Aorta (tissue), 5 donors: ENCODE measurements at regions of chr10 and their contacts with region 1.

Region 1: GRCh38 chr10:77179015-77179695 is 458.5 kb downstream of the KCNMA1 start:
- DNase-seq: peak; percentile 75 to 79
- ATAC-seq: peak; percentile 61
- H3K4me3 ChIP-seq: no peak overlapping the region
- H3K27ac ChIP-seq: peak overlapping the region in 1 of 2 donors; percentile 62
- H3K4me1 ChIP-seq: peaks cover 9 to 12% of the 10 kb centered on the region in 2 donors
- H3K27me3 ChIP-seq: no peaks in the 10 kb centered on the region

Region 2: GRCh38 chr10:77104459-77104980 is 74.6 kb before region 1 on chr10:
- intact Hi-C with region 1: no loop called
- DNase-seq: peak; percentile 74 to 82
- ATAC-seq: peak; percentile 69
- H3K4me3 ChIP-seq: no peak overlapping the region
- H3K27ac ChIP-seq: peak overlapping the region in 1 of 2 donors; percentile 33
- H3K4me1 ChIP-seq: peaks cover 0 to 11% of the 10 kb centered on the region in 2 donors
- H3K27me3 ChIP-seq: no peaks in the 10 kb centered on the region

Region 3: DNA sequence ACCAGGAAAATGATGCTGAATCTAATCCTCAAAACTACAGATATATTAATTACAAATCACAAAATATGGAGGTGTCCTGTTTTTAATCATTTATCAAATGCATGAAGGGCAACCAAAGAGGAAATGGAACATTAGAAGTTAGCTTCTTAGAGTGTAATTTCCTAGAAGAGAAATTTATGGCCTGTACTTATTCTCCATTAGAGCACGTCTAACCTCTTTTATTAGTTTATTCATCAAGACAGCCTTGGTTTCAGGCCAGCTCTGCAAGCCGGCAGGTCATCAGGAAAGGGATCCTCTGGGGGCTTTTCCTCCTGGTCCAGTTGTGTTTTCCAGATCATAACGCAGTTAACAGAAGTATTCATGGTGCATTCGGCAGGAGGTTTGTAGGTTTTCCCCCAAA is 59.1 kb before region 1 on chr10:
- intact Hi-C with region 1: no loop called
- DNase-seq: no peak
- ATAC-seq: no peak
- H3K4me3 ChIP-seq: no peak overlapping the region
- H3K27ac ChIP-seq: no peak overlapping the region
- H3K4me1 ChIP-seq: no peaks in the 10 kb centered on the region
- H3K27me3 ChIP-seq: no peaks in the 10 kb centered on the region

Region 4: DNA sequence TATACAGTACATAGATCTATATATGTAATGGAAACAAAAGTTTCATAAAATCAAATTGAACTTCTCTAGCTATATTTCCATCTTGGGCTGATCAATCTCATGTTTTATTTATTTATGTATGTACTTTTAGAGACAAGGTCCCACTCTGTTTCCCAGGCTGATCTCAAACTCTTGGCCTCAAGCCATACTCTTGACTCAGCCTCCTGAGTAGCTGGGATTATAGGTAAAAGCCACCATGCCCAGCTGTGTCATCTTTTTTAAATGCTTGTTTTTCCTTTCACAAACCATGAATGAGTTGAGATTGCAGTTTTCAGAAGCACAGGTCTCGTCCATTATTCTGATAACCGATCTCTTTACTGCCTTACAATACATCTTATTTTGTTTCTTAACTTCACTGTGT is 57.5 kb after region 1 on chr10:
- intact Hi-C with region 1: loop called (anchors 5 kb)
- DNase-seq: no peak
- ATAC-seq: no peak
- H3K4me3 ChIP-seq: no peak overlapping the region
- H3K27ac ChIP-seq: peak overlapping the region in 1 of 2 donors; percentile 22
- H3K4me1 ChIP-seq: peaks cover 6 to 11% of the 10 kb centered on the region in 2 donors
- H3K27me3 ChIP-seq: no peaks in the 10 kb centered on the region

Region 5: GRCh38 chr10:77251297-77252013 is 72.3 kb after region 1 on chr10:
- intact Hi-C with region 1: loop called in 1 of 2 experiments (anchors 5 kb)
- DNase-seq: no peak
- ATAC-seq: no peak
- H3K4me3 ChIP-seq: no peak overlapping the region
- H3K27ac ChIP-seq: no peak overlapping the region
- H3K4me1 ChIP-seq: peaks cover 3 to 8% of the 10 kb centered on the region in 2 donors
- H3K27me3 ChIP-seq: no peaks in the 10 kb centered on the region

Region 6: DNA sequence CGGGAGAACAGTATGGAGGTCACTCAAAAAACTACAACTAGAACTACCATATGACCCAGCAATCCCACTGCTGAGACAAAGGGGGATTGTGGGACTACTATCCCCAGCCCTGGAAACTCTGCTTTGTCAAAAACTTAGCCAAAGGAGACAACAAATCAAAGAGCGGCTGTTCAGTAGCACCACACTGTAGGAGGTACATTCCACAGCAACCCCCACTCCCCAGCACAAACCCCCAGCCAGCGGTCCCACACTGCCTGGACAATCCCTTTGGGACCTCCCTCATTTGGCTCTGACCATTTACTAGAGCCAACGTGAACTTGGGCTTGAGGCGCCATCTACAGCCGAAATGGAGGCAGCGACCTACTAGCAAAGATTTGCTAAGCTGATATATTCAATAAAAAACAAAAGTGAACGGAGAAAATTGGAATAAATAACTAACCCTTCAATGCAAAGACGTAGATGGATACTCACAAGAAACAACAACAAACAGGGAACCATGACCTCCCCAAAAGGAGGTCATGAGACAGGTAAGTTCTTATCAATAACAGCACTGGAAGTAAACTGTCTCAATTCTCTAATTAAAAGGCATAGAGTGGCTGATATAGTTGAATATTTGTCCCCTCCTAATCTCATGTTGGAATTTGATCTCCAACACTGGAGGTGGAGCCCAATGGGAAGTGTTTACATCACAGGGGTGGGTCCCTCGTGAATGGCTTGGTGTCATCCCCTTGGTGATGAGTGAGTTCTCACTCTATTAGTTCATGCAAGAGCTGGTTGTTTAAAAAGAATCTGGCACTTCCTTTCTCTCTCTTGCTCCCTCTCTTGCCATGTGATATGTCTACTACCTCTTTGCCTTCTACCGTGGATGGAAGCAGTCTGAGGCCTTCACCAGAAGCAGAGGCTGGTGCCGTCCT is 577.4 kb after region 1 on chr10:
- intact Hi-C with region 1: loop called (anchors 5 kb)
- DNase-seq: no peak
- ATAC-seq: no peak
- H3K4me3 ChIP-seq: no peak overlapping the region
- H3K27ac ChIP-seq: no peak overlapping the region
- H3K4me1 ChIP-seq: no peaks in the 10 kb centered on the region
- H3K27me3 ChIP-seq: no peaks in the 10 kb centered on the region